Gastrocnemius medialis (tissue), 4 donors: ENCODE measurements at regions of chr11 and their contacts with region 1.

Region 1: GRCh38 chr11:134050541-134051383 is 18.1 kb upstream of the JAM3 start:
- DNase-seq: peak; percentile 37 to 46
- ATAC-seq: peak; percentile 47 to 49
- H3K4me3 ChIP-seq: peak overlapping the region in 2 of 4 donors; percentile 26 to 37
- H3K27ac ChIP-seq: no peak overlapping the region
- H3K4me1 ChIP-seq: peaks cover 12 to 15% of the 10 kb centered on the region in 2 donors
- H3K27me3 ChIP-seq: no peaks in the 10 kb centered on the region
- CTCF ChIP-seq: peak; percentile 88 to 95 (median 91)
- POLR2A ChIP-seq: no peak

Region 2: GRCh38 chr11:133956650-133957633 is 93.8 kb before region 1 on chr11 and contains the start of gene IGSF9B:
- in situ Hi-C with region 1: no loop called
- intact Hi-C with region 1: loop called (anchors 1 kb)
- DNase-seq: peak; percentile 69 to 80
- ATAC-seq: peak; percentile 83 to 89
- H3K4me3 ChIP-seq: peak within 1 kb of the TSS; percentile 57 to 67 (median 60)
- H3K27ac ChIP-seq: peak within 1 kb of the TSS in 1 of 4 donors; percentile 39
- H3K4me1 ChIP-seq: peaks cover 15 to 19% of the 10 kb centered on the region in 2 donors
- H3K27me3 ChIP-seq: peaks cover 11 to 21% (median 11%) of the 10 kb centered on the region in 3 donors
- CTCF ChIP-seq: no peak
- POLR2A ChIP-seq: peak; percentile 47 to 74
- total RNA-seq, gene IGSF9B: 0.07 to 2.5 (median 1.4) TPM

Region 3: DNA sequence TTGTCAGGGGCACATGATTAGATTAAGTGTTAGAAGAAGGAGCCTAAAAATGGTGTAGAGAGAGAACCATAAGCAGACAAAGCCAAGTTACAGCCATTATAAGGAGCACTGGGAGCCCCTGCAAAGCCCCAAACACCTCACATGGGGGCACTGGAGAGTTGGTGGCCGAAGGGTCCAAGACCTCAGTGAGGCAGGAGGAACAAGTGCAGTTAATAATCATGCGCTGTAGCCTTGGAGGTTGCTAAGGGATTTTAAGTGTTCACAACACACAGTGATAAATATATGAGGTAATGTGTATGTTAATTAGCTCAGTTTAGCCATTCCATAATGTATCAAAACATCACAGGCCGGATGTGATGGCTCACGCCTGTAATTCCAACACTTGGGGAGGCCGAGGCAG is 36.3 kb before region 1 on chr11:
- in situ Hi-C with region 1: no loop called
- intact Hi-C with region 1: loop called (anchors 2 kb)
- DNase-seq: no peak
- ATAC-seq: no peak
- H3K4me3 ChIP-seq: no peak overlapping the region
- H3K27ac ChIP-seq: no peak overlapping the region
- H3K4me1 ChIP-seq: no peaks in the 10 kb centered on the region
- H3K27me3 ChIP-seq: peaks cover 0 to 4% (median 0%) of the 10 kb centered on the region in 3 donors
- CTCF ChIP-seq: peak in 2 of 5 experiments; percentile 18 to 24
- POLR2A ChIP-seq: no peak

Region 4: GRCh38 chr11:134024420-134025081 is 26.2 kb before region 1 on chr11:
- in situ Hi-C with region 1: no loop called
- intact Hi-C with region 1: no loop called
- DNase-seq: no peak
- ATAC-seq: no peak
- H3K4me3 ChIP-seq: no peak overlapping the region
- H3K27ac ChIP-seq: no peak overlapping the region
- H3K4me1 ChIP-seq: no peaks in the 10 kb centered on the region
- H3K27me3 ChIP-seq: peaks cover 3 to 9% (median 5%) of the 10 kb centered on the region in 3 donors
- CTCF ChIP-seq: no peak
- POLR2A ChIP-seq: no peak

Region 5: DNA sequence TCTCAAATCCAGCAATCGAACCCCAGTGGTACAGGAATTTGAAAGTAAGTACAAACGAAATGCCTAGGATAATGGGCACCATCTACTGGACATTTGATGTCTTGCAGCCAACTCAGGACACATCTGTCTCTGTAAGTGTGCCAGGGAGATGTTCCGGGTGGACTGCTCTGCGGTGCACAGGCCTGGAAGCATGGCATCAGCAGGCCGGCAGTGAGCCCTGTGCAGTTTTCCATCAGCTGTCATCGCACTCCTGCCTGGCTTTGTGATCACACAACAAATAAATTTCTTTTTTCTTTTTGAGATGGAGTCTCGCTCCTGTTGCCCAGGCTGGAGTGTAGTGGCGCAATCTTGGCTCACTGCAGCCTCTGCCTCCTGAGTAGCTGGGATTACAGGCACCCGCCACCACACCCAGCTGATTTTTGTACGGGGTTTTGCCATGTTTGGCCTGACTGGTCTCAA is 89.1 kb after region 1 on chr11:
- in situ Hi-C with region 1: loop called (anchors 5 to 10 kb)
- intact Hi-C with region 1: loop called (anchors 1 kb)
- DNase-seq: peak in 1 of 2 donors; percentile 53
- ATAC-seq: peak; percentile 88 to 95
- H3K4me3 ChIP-seq: no peak overlapping the region
- H3K27ac ChIP-seq: no peak overlapping the region
- H3K4me1 ChIP-seq: no peaks in the 10 kb centered on the region
- H3K27me3 ChIP-seq: no peaks in the 10 kb centered on the region
- CTCF ChIP-seq: peak; percentile 78 to 86 (median 82)
- POLR2A ChIP-seq: no peak

Region 6: GRCh38 chr11:134253188-134253993 is 202.6 kb after region 1 on chr11 and contains the starts of genes ACAD8 and THYN1:
- in situ Hi-C with region 1: no loop called
- intact Hi-C with region 1: loop called (anchors 5 kb)
- DNase-seq: peak; percentile 96
- ATAC-seq: peak; percentile 96 to 97
- H3K4me3 ChIP-seq: peak within 1 kb of the TSS; percentile 95 to 100 (median 96)
- H3K27ac ChIP-seq: peak within 1 kb of the TSS; percentile 70 to 87 (median 82)
- H3K4me1 ChIP-seq: peaks cover 24 to 30% of the 10 kb centered on the region in 2 donors
- H3K27me3 ChIP-seq: no peaks in the 10 kb centered on the region
- CTCF ChIP-seq: peak; percentile 49 to 75 (median 60)
- POLR2A ChIP-seq: peak; percentile 61 to 62
- total RNA-seq, gene ACAD8: 19.4 to 29.6 (median 24.7) TPM
- total RNA-seq, gene THYN1: 12.7 to 27.8 (median 17.2) TPM